Psoas muscle (tissue), 8 donors: ENCODE measurements at regions of chr17 and their contacts with region 1.

Region 1: GRCh38 chr17:21043286-21044232 is 748 bp upstream of the USP22 start:
- DNase-seq: peak; percentile 99 to 100
- ATAC-seq: peak; percentile 89 to 94 (median 90)
- H3K4me3 ChIP-seq: peak overlapping the region; percentile 80
- H3K27ac ChIP-seq: peak overlapping the region; percentile 99
- H3K4me1 ChIP-seq: peaks cover 23% of the 10 kb centered on the region
- H3K27me3 ChIP-seq: no peaks in the 10 kb centered on the region
- CTCF ChIP-seq: peak; percentile 92

Region 2: DNA sequence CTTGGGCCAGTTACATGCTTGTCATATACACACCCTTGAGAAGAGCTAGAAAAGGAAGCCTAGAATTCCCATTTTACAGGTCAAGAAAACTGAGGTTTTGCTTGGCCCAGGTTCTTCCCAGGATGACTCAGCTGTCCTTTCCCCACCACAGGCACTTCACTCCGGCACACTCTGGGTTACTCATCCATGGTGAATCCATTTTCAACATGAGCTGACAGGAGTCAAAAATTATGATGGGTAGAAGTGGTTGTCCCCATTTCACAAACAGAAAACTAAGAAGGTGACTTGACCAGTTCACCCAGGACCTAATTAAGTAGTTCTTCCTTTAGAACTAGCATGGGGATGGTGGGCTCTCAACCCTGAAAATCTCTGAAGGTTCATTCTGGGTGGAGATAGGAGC is 68.0 kb before region 1 on chr17:
- intact Hi-C with region 1: no loop called
- DNase-seq: no peak
- ATAC-seq: peak in 1 of 4 donors; percentile 78
- H3K4me3 ChIP-seq: no peak overlapping the region
- H3K27ac ChIP-seq: no peak overlapping the region
- H3K4me1 ChIP-seq: no peaks in the 10 kb centered on the region
- H3K27me3 ChIP-seq: peaks cover 0 to 5% (median 0%) of the 10 kb centered on the region in 3 donors
- CTCF ChIP-seq: no peak

Region 3: DNA sequence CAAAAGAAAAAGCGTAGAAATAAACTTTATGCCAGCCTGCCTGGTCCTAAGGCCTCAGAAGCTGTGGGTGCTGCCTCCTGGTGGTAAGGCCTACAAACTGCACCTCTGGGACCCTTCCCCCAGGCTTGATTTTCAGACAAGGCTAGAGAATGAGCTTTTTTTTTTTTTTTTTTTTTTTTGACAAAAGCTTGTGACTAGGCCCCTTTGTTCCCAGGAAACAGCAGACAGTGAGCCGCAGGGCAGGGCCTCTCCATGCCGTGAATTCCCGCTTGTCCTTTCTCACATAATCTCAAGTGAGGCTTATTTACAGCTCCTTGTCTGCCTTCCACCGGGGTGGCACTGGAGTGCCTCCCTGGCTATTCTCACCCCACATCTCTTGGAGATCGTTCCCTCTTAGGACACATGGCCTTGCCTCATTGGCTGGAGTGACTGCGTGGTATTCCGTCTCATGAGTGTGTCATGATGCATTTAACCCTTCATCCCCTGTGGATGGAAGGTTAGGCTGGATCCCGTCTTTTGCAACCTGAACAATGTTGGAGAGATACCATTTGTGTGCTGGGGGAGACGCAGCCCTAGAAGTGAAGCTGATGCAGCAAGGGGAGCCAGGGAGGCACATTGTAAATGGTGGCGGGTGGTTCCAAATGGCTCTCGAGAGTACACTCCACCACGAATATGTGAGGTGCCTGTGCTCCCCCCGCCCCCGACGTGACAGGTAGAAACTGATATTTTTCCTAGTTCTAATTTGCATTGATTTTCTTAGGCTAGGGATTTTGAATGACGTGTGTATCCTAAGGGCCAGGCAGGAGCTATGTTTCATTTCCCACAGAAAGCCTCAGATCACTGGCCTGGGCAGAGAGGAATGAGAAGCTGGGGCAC is 50.3 kb before region 1 on chr17:
- intact Hi-C with region 1: no loop called
- DNase-seq: peak; percentile 55 to 76
- ATAC-seq: peak; percentile 43 to 70 (median 68)
- H3K4me3 ChIP-seq: peak overlapping the region; percentile 32
- H3K27ac ChIP-seq: no peak overlapping the region
- H3K4me1 ChIP-seq: no peaks in the 10 kb centered on the region
- H3K27me3 ChIP-seq: no peaks in the 10 kb centered on the region
- CTCF ChIP-seq: peak; percentile 83

Region 4: GRCh38 chr17:21078016-21078780 is 34.6 kb after region 1 on chr17:
- intact Hi-C with region 1: loop called in 1 of 2 experiments (anchors 5 kb)
- DNase-seq: no peak
- ATAC-seq: no peak
- H3K4me3 ChIP-seq: no peak overlapping the region
- H3K27ac ChIP-seq: no peak overlapping the region
- H3K4me1 ChIP-seq: no peaks in the 10 kb centered on the region
- H3K27me3 ChIP-seq: no peaks in the 10 kb centered on the region
- CTCF ChIP-seq: no peak

Region 5: GRCh38 chr17:21098934-21099689 is 55.6 kb after region 1 on chr17:
- intact Hi-C with region 1: loop called in 1 of 2 experiments (anchors 10 kb)
- DNase-seq: peak; percentile 34 to 73
- ATAC-seq: peak; percentile 69 to 84 (median 70)
- H3K4me3 ChIP-seq: peak overlapping the region; percentile 66
- H3K27ac ChIP-seq: no peak overlapping the region
- H3K4me1 ChIP-seq: peaks cover 18% of the 10 kb centered on the region
- H3K27me3 ChIP-seq: no peaks in the 10 kb centered on the region
- CTCF ChIP-seq: no peak